IMR-90 (cell line): ENCODE measurements at regions of chr10 and their contacts with region 1.

Region 1: GRCh38 chr10:71319042-71319799 is at the start of gene SLC29A3:
- DNase-seq: peak; percentile 70
- ATAC-seq: peak; percentile 92
- H3K4me3 ChIP-seq: peak within 1 kb of the TSS; percentile 68
- H3K27ac ChIP-seq: peak within 1 kb of the TSS; percentile 13; the same call in 1 of the 2 replicates
- H3K4me1 ChIP-seq: no peaks in the 10 kb centered on the region; the same call in 1 of the 2 replicates
- H3K27me3 ChIP-seq: peaks cover 2% of the 10 kb centered on the region; the same call in 1 of the 2 replicates
- CTCF ChIP-seq: peak; percentile 69
- POLR2A ChIP-seq: no peak
- RAD21 ChIP-seq: peak; percentile 64
- total RNA-seq, gene SLC29A3: 0.72 and 0.83 TPM in 2 replicates

Region 2: DNA sequence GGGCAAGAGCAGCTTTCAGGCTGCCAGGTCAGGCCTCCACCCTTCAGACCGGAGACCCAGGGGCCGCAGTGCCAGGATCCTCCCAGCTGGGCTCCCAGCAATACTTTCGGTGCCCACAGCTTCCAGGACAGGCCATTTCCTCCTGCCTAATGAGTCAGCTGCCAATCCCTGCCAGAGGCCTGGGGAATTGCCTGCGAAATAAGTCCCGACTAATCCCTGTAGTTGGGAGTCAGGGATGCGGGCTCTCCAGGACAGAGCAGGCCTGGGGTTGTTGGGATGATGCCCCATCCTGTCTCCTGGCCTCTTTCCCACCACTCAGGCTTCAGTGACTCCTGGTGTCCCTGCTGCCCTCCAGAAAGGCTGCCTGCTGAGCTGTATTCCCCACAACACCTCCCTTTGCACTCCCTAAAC is 250.4 kb before region 1 on chr10:
- CTCF ChIA-PET with region 1: no interaction called
- POLR2A ChIA-PET with region 1: interaction called, 12 read pairs
- dilution Hi-C with region 1: no loop called
- in situ Hi-C with region 1: no loop called
- intact Hi-C with region 1: no loop called
- DNase-seq: peak; percentile 2
- ATAC-seq: no peak; the same call in 1 of the 2 replicates
- H3K4me3 ChIP-seq: no peak overlapping the region
- H3K27ac ChIP-seq: no peak overlapping the region
- H3K4me1 ChIP-seq: no peaks in the 10 kb centered on the region
- H3K27me3 ChIP-seq: peaks cover 48% of the 10 kb centered on the region
- CTCF ChIP-seq: no peak
- POLR2A ChIP-seq: no peak
- RAD21 ChIP-seq: no peak

Region 3: DNA sequence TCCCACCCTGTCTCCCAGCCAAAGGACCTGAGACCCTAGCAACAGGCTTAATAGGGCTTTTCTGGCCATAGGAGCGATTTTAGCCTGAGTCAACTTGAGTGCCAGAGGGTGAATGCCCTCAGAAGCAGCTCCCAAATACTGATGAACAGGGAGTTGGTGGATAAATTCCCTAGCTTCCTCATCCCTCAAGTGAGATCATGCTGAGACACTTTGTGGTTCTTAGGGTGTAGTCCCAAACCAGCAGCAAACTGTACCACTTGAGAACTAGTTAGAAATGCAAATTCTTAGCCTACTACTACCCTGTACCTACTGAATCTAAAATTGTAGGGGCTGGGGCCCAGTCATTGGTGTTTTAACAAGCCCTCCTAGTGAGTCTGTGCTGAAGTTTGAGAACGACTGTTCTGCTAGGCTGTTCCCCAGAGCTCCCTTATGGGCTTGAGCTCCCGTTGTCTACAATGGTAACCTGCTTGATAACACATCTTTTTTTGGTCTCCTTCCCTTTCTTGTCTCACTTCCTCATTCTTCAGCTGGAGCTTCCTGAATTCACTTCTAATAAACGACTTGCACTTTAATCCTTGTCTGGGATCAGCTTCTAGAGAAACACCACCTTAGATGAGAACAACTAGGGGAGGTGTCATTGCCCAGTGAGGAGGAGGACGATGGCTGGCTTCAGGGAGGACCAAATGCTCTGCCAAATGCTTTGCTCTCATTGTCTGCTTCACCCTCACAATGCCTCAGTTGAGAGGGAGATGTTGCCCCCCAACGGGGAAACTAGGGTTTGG is 59.3 kb after region 1 on chr10:
- CTCF ChIA-PET with region 1: no interaction called
- POLR2A ChIA-PET with region 1: no interaction called
- dilution Hi-C with region 1: no loop called
- in situ Hi-C with region 1: no loop called
- intact Hi-C with region 1: loop called (anchors 5 kb)
- DNase-seq: no peak
- ATAC-seq: no peak
- H3K4me3 ChIP-seq: no peak overlapping the region
- H3K27ac ChIP-seq: no peak overlapping the region
- H3K4me1 ChIP-seq: no peaks in the 10 kb centered on the region
- H3K27me3 ChIP-seq: peaks cover 30% of the 10 kb centered on the region
- CTCF ChIP-seq: no peak
- POLR2A ChIP-seq: no peak
- RAD21 ChIP-seq: no peak

Region 4: GRCh38 chr10:71608819-71609768 is 289.9 kb after region 1 on chr10:
- CTCF ChIA-PET with region 1: interaction called, 3 read pairs
- POLR2A ChIA-PET with region 1: no interaction called
- dilution Hi-C with region 1: no loop called
- in situ Hi-C with region 1: loop called (anchors 10 kb)
- intact Hi-C with region 1: loop called (anchors 1 kb)
- DNase-seq: peak; percentile 47
- ATAC-seq: peak; percentile 77
- H3K4me3 ChIP-seq: no peak overlapping the region
- H3K27ac ChIP-seq: no peak overlapping the region
- H3K4me1 ChIP-seq: no peaks in the 10 kb centered on the region
- H3K27me3 ChIP-seq: peaks cover 43% of the 10 kb centered on the region
- CTCF ChIP-seq: peak; percentile 75
- POLR2A ChIP-seq: no peak
- RAD21 ChIP-seq: peak; percentile 60

Region 5: DNA sequence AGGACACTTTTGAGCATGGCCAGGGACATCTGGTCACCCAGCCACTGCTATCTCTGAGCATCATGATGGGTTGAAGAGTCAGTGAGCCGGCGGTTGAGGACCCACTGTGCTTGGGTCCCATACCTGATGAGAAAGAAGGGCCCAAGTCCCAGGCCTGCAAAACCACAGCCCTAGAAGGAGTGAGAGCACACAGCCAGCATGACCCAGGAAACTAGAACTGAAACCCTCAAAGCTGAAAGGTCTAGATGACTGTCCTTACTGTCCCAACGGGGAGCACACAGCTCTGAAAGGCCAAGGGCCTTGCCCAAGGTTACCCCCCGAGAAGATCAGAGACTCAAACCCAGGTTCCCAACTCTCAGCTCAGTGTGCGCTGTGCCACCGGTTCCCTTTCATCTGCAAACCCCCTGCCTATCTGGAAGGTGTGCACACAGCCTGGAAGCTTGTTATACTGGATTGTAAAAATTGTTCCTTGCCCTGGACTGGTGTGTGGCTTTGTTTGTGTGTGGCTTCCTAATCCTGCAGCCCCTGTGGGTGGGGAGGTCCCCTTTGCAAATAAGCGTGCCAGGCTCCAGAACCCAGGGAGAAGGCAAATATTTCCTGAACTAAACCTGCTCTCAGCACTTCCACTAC is 554.5 kb after region 1 on chr10:
- CTCF ChIA-PET with region 1: no interaction called
- POLR2A ChIA-PET with region 1: no interaction called
- dilution Hi-C with region 1: no loop called
- in situ Hi-C with region 1: no loop called
- intact Hi-C with region 1: no loop called
- DNase-seq: no peak
- ATAC-seq: no peak
- H3K4me3 ChIP-seq: no peak overlapping the region
- H3K27ac ChIP-seq: no peak overlapping the region
- H3K4me1 ChIP-seq: 0 out of 2 replicates have a peak, but pooled peaks cover 3% of the 10 kb centered on the region
- H3K27me3 ChIP-seq: peaks cover 34% of the 10 kb centered on the region
- CTCF ChIP-seq: no peak
- POLR2A ChIP-seq: no peak
- RAD21 ChIP-seq: no peak

Region 6: GRCh38 chr10:71893920-71894319 is 574.7 kb after region 1 on chr10:
- CTCF ChIA-PET with region 1: no interaction called
- POLR2A ChIA-PET with region 1: no interaction called
- dilution Hi-C with region 1: no loop called
- in situ Hi-C with region 1: no loop called
- intact Hi-C with region 1: loop called (anchors 2 kb)
- DNase-seq: no peak
- ATAC-seq: no peak
- H3K4me3 ChIP-seq: no peak overlapping the region
- H3K27ac ChIP-seq: no peak overlapping the region
- H3K4me1 ChIP-seq: peaks cover 4% of the 10 kb centered on the region; the same call in 1 of the 2 replicates
- H3K27me3 ChIP-seq: 0 out of 2 replicates have a peak, but pooled peaks cover 2% of the 10 kb centered on the region
- CTCF ChIP-seq: no peak
- POLR2A ChIP-seq: no peak
- RAD21 ChIP-seq: no peak